ENCODE measurements at regions of chr22 and their contacts with region 1.

Region 1: GRCh38 chr22:22207845-22208564 is 36.6 kb upstream of the VPREB1 start:
- DNase-seq: peak; percentile 91
- H3K4me3 Mint-ChIP-seq: peak overlapping the region; percentile 2
- H3K27ac Mint-ChIP-seq: peak overlapping the region; percentile 46
- H3K4me1 Mint-ChIP-seq: peaks cover 37% of the 10 kb centered on the region
- H3K27me3 Mint-ChIP-seq: no peaks in the 10 kb centered on the region

Region 2: DNA sequence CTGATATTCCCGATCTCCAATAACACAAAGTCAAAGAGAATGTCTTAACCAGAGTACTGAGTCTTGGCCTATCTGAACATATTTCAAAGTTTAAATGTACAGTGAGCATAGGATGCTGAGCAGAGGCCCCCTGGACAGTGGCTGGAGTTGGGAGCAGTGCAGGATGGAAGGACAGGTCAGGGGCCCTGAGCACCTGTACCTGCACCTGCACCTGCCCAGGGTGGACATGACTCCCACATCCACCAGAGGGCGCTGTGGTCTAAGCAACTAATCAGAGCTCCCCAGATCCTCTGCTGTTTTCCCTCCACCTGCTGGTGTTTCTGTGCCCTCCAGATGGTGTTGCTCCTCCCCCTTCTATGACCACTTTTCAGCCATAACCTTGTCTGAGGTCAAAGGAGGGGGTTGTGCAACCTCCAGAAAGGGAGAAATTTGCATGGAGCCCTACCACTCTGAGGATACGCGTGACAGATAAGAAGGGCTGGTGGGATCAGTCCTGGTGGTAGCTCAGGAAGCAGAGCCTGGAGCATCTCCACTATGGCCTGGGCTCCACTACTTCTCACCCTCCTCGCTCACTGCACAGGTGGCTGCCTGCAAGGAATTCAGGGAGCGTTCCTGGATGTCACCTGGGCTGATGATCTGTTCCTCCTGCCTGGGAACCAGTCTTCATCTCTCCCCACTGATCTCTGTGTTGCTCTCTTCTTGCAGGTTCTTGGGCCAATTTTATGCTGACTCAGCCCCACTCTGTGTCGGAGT is 12.6 kb before region 1 on chr22:
- CTCF ChIA-PET with region 1: interaction called, 45 read pairs
- POLR2A ChIA-PET with region 1: no interaction called
- intact Hi-C with region 1: no loop called
- DNase-seq: peak; percentile 86
- H3K4me3 Mint-ChIP-seq: no peak overlapping the region
- H3K27ac Mint-ChIP-seq: no peak overlapping the region
- H3K4me1 Mint-ChIP-seq: no peaks in the 10 kb centered on the region
- H3K27me3 Mint-ChIP-seq: peaks cover 15% of the 10 kb centered on the region

Region 3: GRCh38 chr22:22235558-22235957 is 27.6 kb after region 1 on chr22:
- CTCF ChIA-PET with region 1: interaction called, 569 read pairs
- POLR2A ChIA-PET with region 1: interaction called, 7 read pairs
- intact Hi-C with region 1: loop called (anchors 1 kb)
- DNase-seq: peak; percentile 78
- H3K4me3 Mint-ChIP-seq: no peak overlapping the region
- H3K27ac Mint-ChIP-seq: no peak overlapping the region
- H3K4me1 Mint-ChIP-seq: peaks cover 6% of the 10 kb centered on the region
- H3K27me3 Mint-ChIP-seq: no peaks in the 10 kb centered on the region

Region 4: GRCh38 chr22:22322792-22323191 is 114.8 kb after region 1 on chr22:
- CTCF ChIA-PET with region 1: interaction called, 4 read pairs
- POLR2A ChIA-PET with region 1: no interaction called
- intact Hi-C with region 1: loop called (anchors 1 kb)
- DNase-seq: no peak
- H3K4me3 Mint-ChIP-seq: no peak overlapping the region
- H3K27ac Mint-ChIP-seq: no peak overlapping the region
- H3K4me1 Mint-ChIP-seq: no peaks in the 10 kb centered on the region
- H3K27me3 Mint-ChIP-seq: peaks cover 3% of the 10 kb centered on the region

Region 5: GRCh38 chr22:22422629-22423112 is 214.7 kb after region 1 on chr22:
- CTCF ChIA-PET with region 1: interaction called, 3 read pairs
- POLR2A ChIA-PET with region 1: no interaction called
- intact Hi-C with region 1: loop called (anchors 1 kb)
- DNase-seq: peak; percentile 78
- H3K4me3 Mint-ChIP-seq: no peak overlapping the region
- H3K27ac Mint-ChIP-seq: no peak overlapping the region
- H3K4me1 Mint-ChIP-seq: no peaks in the 10 kb centered on the region
- H3K27me3 Mint-ChIP-seq: peaks cover 19% of the 10 kb centered on the region

Measured in activated CD4-positive, alpha-beta memory T cell treated with anti-CD3 and anti-CD28 coated beads for 36 hours (primary cell).